CD4-positive, alpha-beta memory T cell (primary cell): ENCODE measurements at regions of chr15 and their contacts with region 1.

Region 1: DNA sequence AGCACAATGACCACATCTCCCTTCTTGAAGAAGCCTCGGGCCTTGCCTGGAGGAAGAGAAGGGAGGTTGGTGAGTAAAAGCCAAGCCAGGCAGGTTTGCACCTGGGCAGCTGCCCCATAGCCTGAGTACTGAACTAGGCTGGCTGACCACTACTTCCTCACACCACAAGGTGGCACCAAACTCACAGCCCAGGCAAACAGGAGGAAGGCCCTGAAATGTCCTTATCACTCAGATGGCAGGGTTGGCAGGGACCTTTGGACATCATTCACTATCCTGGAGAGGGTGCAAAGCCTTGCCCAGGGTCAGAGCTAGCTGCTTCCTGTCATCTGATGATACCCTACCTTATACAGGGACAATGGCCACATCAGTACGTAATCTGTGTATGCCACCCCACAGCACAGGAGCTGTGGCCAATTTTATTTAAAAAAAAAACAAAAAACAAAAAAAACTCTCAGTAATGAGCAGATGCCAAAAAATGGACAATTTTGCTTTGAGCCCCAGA is 2.2 kb upstream of the GRAMD2A start:
- DNase-seq: peak; percentile 69 to 78 (median 72)
- H3K4me3 ChIP-seq: no peak overlapping the region
- H3K4me3 Mint-ChIP-seq: no peak overlapping the region
- H3K27ac ChIP-seq: no peak overlapping the region
- H3K27ac Mint-ChIP-seq: peak overlapping the region in 3 of 7 donors; percentile 30 to 53 (median 48)
- H3K4me1 ChIP-seq: peaks cover 4% of the 10 kb centered on the region
- H3K4me1 Mint-ChIP-seq: peaks cover 0 to 14% (median 9%) of the 10 kb centered on the region in 4 donors
- H3K27me3 ChIP-seq: no peaks in the 10 kb centered on the region
- H3K27me3 Mint-ChIP-seq: peaks cover 2 to 3% of the 10 kb centered on the region in 2 donors

Region 2: GRCh38 chr15:72217216-72217615 is 17.5 kb after region 1 on chr15:
- CTCF ChIA-PET with region 1: interaction called, 16 read pairs
- POLR2A ChIA-PET with region 1: interaction called, 3 read pairs
- intact Hi-C with region 1: no loop called
- DNase-seq: no peak
- H3K4me3 ChIP-seq: no peak overlapping the region
- H3K4me3 Mint-ChIP-seq: no peak overlapping the region
- H3K27ac ChIP-seq: no peak overlapping the region
- H3K27ac Mint-ChIP-seq: peak overlapping the region in 3 of 7 donors; percentile 11 to 80 (median 46)
- H3K4me1 ChIP-seq: peaks cover 28% of the 10 kb centered on the region
- H3K4me1 Mint-ChIP-seq: peaks cover 16 to 37% (median 28%) of the 10 kb centered on the region in 4 donors
- H3K27me3 ChIP-seq: no peaks in the 10 kb centered on the region
- H3K27me3 Mint-ChIP-seq: no peaks in the 10 kb centered on the region

Region 3: DNA sequence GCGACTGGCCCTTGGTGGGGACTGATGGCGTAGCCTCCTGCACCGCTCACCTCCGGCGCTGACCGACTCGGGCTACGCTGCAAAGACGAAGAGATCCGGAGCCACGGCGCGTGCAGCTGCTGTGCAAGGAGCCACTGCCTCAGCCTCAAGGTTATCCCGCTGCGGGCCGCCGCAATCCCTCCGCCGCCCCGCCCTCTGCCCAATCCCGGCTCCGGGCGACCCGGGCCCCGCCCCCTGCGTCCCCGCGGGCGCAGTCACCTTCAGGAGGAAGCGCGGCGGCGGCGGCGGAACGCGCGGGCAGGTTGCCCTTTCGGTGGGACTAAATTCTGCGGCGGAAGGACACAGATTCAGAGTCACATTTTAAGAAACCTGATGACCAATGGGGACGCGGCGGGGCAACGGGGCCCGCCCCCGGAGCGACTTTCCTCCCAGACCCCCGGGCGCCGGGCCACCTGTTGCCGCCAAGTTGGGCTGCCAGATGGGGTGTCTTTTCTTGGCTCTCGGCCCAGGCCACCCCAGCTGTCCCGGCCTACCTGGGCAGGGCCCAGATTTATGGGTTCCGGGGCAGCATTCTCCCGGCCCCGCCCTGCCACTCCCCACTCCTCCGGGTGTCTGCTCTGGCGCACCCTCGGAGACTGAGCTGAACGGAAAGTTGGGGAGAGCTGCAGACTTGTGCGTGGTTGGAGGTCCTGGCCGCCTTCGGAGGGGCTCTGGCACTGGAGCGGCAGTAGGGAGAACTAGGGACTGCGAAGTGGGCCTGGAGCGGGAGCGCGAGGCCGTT is 31.5 kb after region 1 on chr15 and contains the start of gene PKM:
- CTCF ChIA-PET with region 1: interaction called, 53 read pairs
- POLR2A ChIA-PET with region 1: interaction called, 18 read pairs
- intact Hi-C with region 1: loop called (anchors 1 kb)
- DNase-seq: peak; percentile 88 to 90 (median 89)
- H3K4me3 ChIP-seq: peak within 1 kb of the TSS; percentile 68 to 92
- H3K4me3 Mint-ChIP-seq: peak within 1 kb of the TSS; percentile 95 to 99 (median 98)
- H3K27ac ChIP-seq: peak within 1 kb of the TSS; percentile 96
- H3K27ac Mint-ChIP-seq: peak within 1 kb of the TSS; percentile 94 to 100 (median 97)
- H3K4me1 ChIP-seq: peaks cover 42% of the 10 kb centered on the region
- H3K4me1 Mint-ChIP-seq: peaks cover 35 to 70% (median 50%) of the 10 kb centered on the region in 4 donors
- H3K27me3 ChIP-seq: no peaks in the 10 kb centered on the region
- H3K27me3 Mint-ChIP-seq: peaks cover 0 to 4% of the 10 kb centered on the region in 2 donors
- total RNA-seq, gene PKM: 378 to 383 TPM

Region 4: DNA sequence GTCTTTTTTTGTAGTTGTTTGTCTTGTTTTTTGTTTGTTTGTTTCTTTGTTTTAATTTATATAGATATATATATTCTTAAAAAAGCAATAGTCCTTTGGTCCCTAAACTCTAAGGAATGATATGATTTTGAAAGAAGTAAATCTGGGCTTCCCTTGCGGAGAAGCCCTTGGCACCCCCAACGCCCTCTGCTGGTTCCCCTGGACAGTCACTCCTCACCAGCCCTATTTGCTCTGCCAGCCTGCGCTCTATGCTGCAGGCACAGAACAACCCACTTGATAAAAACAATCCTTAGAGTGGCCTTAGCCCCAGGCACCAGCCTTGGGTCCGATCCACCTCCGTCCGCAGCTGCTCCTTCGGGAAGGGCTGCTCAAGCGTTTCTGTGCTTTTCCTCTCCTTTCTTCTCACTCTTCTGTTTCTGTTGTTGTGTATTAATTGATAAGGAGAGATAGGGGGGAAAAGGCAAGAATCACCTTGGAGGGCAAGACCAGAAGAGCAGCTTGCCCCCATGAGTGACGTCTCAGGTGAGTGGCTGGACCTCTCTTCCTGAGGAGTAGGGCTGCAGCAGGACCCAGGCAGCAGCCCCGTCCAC is 86.3 kb after region 1 on chr15:
- CTCF ChIA-PET with region 1: interaction called, 82 read pairs
- POLR2A ChIA-PET with region 1: no interaction called
- intact Hi-C with region 1: loop called (anchors 1 kb)
- DNase-seq: peak in 4 of 5 donors; percentile 38 to 46 (median 42)
- H3K4me3 ChIP-seq: no peak overlapping the region
- H3K4me3 Mint-ChIP-seq: no peak overlapping the region
- H3K27ac ChIP-seq: no peak overlapping the region
- H3K27ac Mint-ChIP-seq: no peak overlapping the region
- H3K4me1 ChIP-seq: no peaks in the 10 kb centered on the region
- H3K4me1 Mint-ChIP-seq: no peaks in the 10 kb centered on the region
- H3K27me3 ChIP-seq: no peaks in the 10 kb centered on the region
- H3K27me3 Mint-ChIP-seq: no peaks in the 10 kb centered on the region

Region 5: DNA sequence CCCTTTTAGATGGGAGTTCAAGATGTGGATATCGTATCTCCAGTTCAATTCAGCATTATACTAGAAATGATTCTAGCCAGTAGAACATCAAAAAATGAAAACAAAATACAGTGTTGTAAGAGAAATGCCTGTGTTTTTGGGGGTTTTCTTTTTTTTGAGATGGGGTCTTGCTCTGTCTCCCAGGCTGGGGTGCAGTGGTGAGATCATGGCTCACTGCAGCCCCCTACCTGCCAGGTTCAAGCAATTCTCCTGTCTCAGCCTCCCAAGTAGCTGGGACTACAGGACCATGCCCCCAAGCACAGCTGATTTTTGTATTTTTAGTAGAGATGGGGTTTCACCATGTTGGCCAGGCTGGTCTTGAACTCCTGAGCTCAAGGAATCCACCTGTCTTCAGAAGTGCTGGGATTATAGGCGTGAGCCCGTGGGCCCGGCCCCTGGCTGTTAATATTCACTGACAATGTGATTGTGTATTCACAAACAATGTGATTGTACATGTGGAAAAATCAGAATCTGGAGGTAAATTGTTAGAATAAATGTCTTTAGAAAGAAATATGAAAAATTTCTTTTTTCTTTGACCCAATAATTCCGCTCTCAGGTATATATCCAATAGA is 333.3 kb after region 1 on chr15:
- CTCF ChIA-PET with region 1: interaction called, 3 read pairs
- POLR2A ChIA-PET with region 1: no interaction called
- intact Hi-C with region 1: loop called (anchors 5 kb)
- DNase-seq: peak in 4 of 5 donors; percentile 22 to 29 (median 28)
- H3K4me3 ChIP-seq: no peak overlapping the region
- H3K4me3 Mint-ChIP-seq: peak overlapping the region in 1 of 8 donors; percentile 46
- H3K27ac ChIP-seq: no peak overlapping the region
- H3K27ac Mint-ChIP-seq: peak overlapping the region in 1 of 7 donors; percentile 69
- H3K4me1 ChIP-seq: peaks cover 37% of the 10 kb centered on the region
- H3K4me1 Mint-ChIP-seq: peaks cover 33 to 78% (median 49%) of the 10 kb centered on the region in 4 donors
- H3K27me3 ChIP-seq: no peaks in the 10 kb centered on the region
- H3K27me3 Mint-ChIP-seq: no peaks in the 10 kb centered on the region